ENCODE measurements at regions of chr18 and their contacts with region 1.

Region 1: DNA sequence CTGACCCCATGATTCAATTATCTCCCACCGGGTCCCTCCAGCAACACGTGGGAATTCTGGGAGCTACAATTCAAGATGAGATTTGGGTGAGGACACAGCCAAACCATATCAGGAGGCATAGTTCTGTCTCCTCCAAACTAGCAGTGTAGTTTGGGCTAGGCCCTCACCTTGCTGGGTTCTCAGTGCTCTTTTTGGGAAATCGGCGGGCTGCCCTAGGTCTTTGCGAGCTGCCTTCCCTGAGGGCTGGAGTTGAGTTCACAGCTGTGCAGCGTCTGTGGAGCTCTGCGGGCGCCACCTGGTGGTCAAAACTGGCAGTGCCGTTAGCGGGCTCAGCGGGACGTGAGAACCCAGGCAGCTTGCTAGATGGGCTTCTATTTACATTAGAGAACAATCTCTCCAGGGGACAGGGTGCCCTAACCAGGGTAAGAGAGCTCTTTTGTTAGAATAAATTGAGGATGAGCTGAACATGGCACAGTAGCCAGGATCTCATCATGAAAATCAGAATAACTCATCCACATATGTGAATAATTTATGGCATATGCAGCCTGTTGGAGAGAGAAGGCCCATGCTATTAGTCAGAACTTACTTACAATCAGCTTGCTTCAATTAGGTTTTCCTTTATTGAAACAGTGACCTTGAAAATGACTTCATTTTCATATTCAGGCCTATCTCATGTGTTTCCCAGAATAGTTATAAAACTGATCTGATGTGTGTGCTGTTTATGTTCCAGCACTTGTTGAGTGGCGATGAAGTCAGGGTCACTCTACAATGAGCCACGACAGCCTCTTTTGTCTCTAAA is 27.4 kb upstream of the YES1 start:
- DNase-seq: peak; percentile 70 to 94 (median 89)
- ATAC-seq: peak; percentile 97
- H3K4me3 ChIP-seq: no peak overlapping the region
- H3K4me3 Mint-ChIP-seq: no peak overlapping the region
- H3K27ac ChIP-seq: no peak overlapping the region
- H3K27ac Mint-ChIP-seq: no peak overlapping the region
- H3K4me1 ChIP-seq: peaks cover 3% of the 10 kb centered on the region
- H3K4me1 Mint-ChIP-seq: peaks cover 6% of the 10 kb centered on the region
- H3K27me3 ChIP-seq: no peaks in the 10 kb centered on the region
- H3K27me3 Mint-ChIP-seq: no peaks in the 10 kb centered on the region
- CTCF ChIP-seq: peak; percentile 91

Region 2: GRCh38 chr18:623761-624620 is 215.4 kb before region 1 on chr18:
- CTCF ChIA-PET with region 1: interaction called, 14 read pairs
- POLR2A ChIA-PET with region 1: no interaction called
- intact Hi-C with region 1: loop called (anchors 2 kb)
- DNase-seq: peak; percentile 23 to 74 (median 44)
- ATAC-seq: peak; percentile 73
- H3K4me3 ChIP-seq: no peak overlapping the region
- H3K4me3 Mint-ChIP-seq: no peak overlapping the region
- H3K27ac ChIP-seq: no peak overlapping the region
- H3K27ac Mint-ChIP-seq: no peak overlapping the region
- H3K4me1 ChIP-seq: no peaks in the 10 kb centered on the region
- H3K4me1 Mint-ChIP-seq: no peaks in the 10 kb centered on the region
- H3K27me3 ChIP-seq: peaks cover 0 to 5% of the 10 kb centered on the region in 2 experiments
- H3K27me3 Mint-ChIP-seq: peaks cover 14% of the 10 kb centered on the region
- CTCF ChIP-seq: peak; percentile 70

Region 3: GRCh38 chr18:907115-907884 is 67.9 kb after region 1 on chr18:
- CTCF ChIA-PET with region 1: no interaction called
- POLR2A ChIA-PET with region 1: no interaction called
- intact Hi-C with region 1: no loop called
- DNase-seq: peak in 3 of 14 experiments; percentile 2 to 13 (median 13)
- ATAC-seq: no peak
- H3K4me3 ChIP-seq: peak overlapping the region; percentile 43
- H3K4me3 Mint-ChIP-seq: no peak overlapping the region
- H3K27ac ChIP-seq: no peak overlapping the region
- H3K27ac Mint-ChIP-seq: no peak overlapping the region
- H3K4me1 ChIP-seq: peaks cover 40% of the 10 kb centered on the region
- H3K4me1 Mint-ChIP-seq: peaks cover 17% of the 10 kb centered on the region
- H3K27me3 ChIP-seq: peaks cover 68 to 91% of the 10 kb centered on the region in 2 experiments
- H3K27me3 Mint-ChIP-seq: peaks cover 82% of the 10 kb centered on the region
- CTCF ChIP-seq: no peak

Region 4: GRCh38 chr18:919078-919477 is 79.7 kb after region 1 on chr18:
- CTCF ChIA-PET with region 1: no interaction called
- POLR2A ChIA-PET with region 1: no interaction called
- intact Hi-C with region 1: no loop called
- DNase-seq: no peak
- ATAC-seq: no peak
- H3K4me3 ChIP-seq: no peak overlapping the region
- H3K4me3 Mint-ChIP-seq: no peak overlapping the region
- H3K27ac ChIP-seq: no peak overlapping the region
- H3K27ac Mint-ChIP-seq: no peak overlapping the region
- H3K4me1 ChIP-seq: no peaks in the 10 kb centered on the region
- H3K4me1 Mint-ChIP-seq: no peaks in the 10 kb centered on the region
- H3K27me3 ChIP-seq: peaks cover 10 to 23% of the 10 kb centered on the region in 2 experiments
- H3K27me3 Mint-ChIP-seq: peaks cover 69% of the 10 kb centered on the region
- CTCF ChIP-seq: no peak

Region 5: DNA sequence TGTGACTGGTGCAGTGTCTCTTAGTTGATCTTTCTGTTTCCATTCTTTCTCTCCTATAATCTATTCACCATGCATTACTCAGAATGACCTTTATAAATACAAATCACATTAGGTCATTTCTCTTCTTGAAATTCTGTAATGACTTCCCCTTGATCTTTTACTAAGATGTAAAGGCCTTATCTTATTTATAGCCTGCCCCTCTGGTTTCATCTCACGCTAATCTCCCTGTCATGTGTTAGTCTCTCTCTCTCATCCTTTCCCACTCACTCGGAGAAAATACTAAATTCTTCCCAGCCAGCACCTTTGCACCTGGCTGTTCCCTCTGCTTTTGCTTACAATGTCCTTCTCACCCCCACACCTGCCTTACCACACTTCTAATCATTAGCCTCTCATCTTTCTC is 596.1 kb after region 1 on chr18:
- CTCF ChIA-PET with region 1: no interaction called
- POLR2A ChIA-PET with region 1: no interaction called
- intact Hi-C with region 1: no loop called
- DNase-seq: no peak
- ATAC-seq: no peak
- H3K4me3 ChIP-seq: no peak overlapping the region
- H3K4me3 Mint-ChIP-seq: no peak overlapping the region
- H3K27ac ChIP-seq: no peak overlapping the region
- H3K27ac Mint-ChIP-seq: no peak overlapping the region
- H3K4me1 ChIP-seq: no peaks in the 10 kb centered on the region
- H3K4me1 Mint-ChIP-seq: no peaks in the 10 kb centered on the region
- H3K27me3 ChIP-seq: no peaks in the 10 kb centered on the region
- H3K27me3 Mint-ChIP-seq: no peaks in the 10 kb centered on the region
- CTCF ChIP-seq: no peak